Motor neuron (in vitro differentiated cells): ENCODE measurements at regions of chr15 and their contacts with region 1.

Region 1: DNA sequence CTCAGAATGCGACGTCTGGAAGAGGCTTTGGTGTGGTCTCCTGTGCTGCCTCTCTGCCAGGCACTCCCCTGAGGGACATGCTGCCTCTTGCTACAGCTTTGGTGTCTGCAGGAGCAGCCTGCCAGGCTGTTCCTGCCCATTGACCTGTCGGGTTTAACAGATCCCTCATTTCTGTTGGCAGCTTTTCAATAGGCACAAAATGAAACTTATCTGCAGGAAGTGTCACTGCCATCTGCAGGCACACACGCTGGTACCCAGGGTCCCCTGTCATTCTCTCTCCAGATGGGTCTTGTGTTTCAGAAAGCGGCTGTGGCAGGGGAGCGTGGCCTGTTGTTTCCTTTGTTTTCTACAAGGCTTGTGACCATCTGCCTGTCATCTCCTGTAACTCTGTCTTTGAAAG is 328.3 kb upstream of the CHRM5 start:
- ATAC-seq: peak in 5 of 8 experiments; percentile 84 to 98 (median 92)
- H3K4me3 ChIP-seq: no peak overlapping the region
- H3K27ac ChIP-seq: no peak overlapping the region
- H3K4me1 ChIP-seq: peaks cover 8 to 11% of the 10 kb centered on the region in 2 donors

Region 2: DNA sequence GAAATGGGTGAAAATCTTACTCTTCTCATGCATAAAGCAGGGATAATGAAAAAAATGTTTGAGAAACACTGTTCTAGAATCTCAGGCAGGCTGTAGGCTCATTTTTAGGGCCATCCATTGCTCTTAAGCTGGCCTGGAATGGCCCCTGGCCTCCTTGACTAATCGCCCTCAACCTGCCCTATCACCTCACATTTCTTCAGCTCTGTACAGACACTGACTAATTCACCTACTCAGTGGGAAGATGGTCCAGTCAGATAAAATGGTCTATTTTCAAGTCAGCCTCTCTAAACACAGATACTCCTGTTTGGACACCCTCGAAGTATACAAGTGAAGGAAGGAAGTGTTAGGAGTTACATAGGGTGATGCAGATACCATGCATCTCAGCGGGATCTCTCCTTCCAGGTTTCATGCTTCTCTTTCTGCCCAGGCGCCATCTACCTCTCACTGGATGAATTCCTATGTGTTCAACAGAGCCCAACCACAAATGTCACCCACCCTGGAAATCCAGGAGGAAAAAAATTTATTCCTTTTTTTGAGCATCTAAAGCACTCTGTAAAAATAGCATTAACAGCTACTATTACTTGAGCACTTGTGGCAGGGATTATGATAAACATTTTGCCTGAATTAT is 457.6 kb before region 1 on chr15:
- in situ Hi-C with region 1: no loop called
- ATAC-seq: no peak
- H3K4me3 ChIP-seq: no peak overlapping the region
- H3K27ac ChIP-seq: no peak overlapping the region
- H3K4me1 ChIP-seq: peaks cover 4 to 7% of the 10 kb centered on the region in 2 donors

Region 3: GRCh38 chr15:33298631-33299030 is 341.3 kb before region 1 on chr15:
- in situ Hi-C with region 1: no loop called
- ATAC-seq: no peak
- H3K4me3 ChIP-seq: no peak overlapping the region
- H3K27ac ChIP-seq: no peak overlapping the region
- H3K4me1 ChIP-seq: no peaks in the 10 kb centered on the region

Region 4: GRCh38 chr15:33547876-33548275 is 92.1 kb before region 1 on chr15:
- in situ Hi-C with region 1: loop called in 1 of 9 experiments (anchors 25 kb)
- ATAC-seq: peak in 4 of 8 experiments; percentile 24 to 63 (median 54)
- H3K4me3 ChIP-seq: no peak overlapping the region
- H3K27ac ChIP-seq: no peak overlapping the region
- H3K4me1 ChIP-seq: no peaks in the 10 kb centered on the region

Region 5: GRCh38 chr15:33581032-33581431 is 58.9 kb before region 1 on chr15:
- in situ Hi-C with region 1: loop called in 1 of 9 experiments (anchors 10 kb)
- ATAC-seq: peak in 7 of 8 experiments; percentile 40 to 84 (median 80)
- H3K4me3 ChIP-seq: no peak overlapping the region
- H3K27ac ChIP-seq: no peak overlapping the region
- H3K4me1 ChIP-seq: no peaks in the 10 kb centered on the region